ENCODE measurements at regions of chr6 and their contacts with region 1.

Region 1: GRCh38 chr6:154474636-154475428 is 35.7 kb downstream of the CNKSR3 start:
- DNase-seq: peak; percentile 41 to 43
- H3K4me3 ChIP-seq: no peak overlapping the region
- H3K27ac ChIP-seq: 0 out of 2 replicates have a peak overlapping the region, but pooled peaks have one; percentile 24
- H3K4me1 ChIP-seq: peaks cover 15% of the 10 kb centered on the region
- H3K27me3 ChIP-seq: no peaks in the 10 kb centered on the region
- CTCF ChIP-seq: no peak

Region 2: GRCh38 chr6:154399097-154399496 is 75.7 kb before region 1 on chr6:
- CTCF ChIA-PET with region 1: no interaction called
- POLR2A ChIA-PET with region 1: no interaction called
- intact Hi-C with region 1: no loop called
- DNase-seq: no peak
- H3K4me3 ChIP-seq: no peak overlapping the region
- H3K27ac ChIP-seq: no peak overlapping the region
- H3K4me1 ChIP-seq: peaks cover 8% of the 10 kb centered on the region; the same call in 1 of the 2 replicates
- H3K27me3 ChIP-seq: no peaks in the 10 kb centered on the region
- CTCF ChIP-seq: no peak

Region 3: DNA sequence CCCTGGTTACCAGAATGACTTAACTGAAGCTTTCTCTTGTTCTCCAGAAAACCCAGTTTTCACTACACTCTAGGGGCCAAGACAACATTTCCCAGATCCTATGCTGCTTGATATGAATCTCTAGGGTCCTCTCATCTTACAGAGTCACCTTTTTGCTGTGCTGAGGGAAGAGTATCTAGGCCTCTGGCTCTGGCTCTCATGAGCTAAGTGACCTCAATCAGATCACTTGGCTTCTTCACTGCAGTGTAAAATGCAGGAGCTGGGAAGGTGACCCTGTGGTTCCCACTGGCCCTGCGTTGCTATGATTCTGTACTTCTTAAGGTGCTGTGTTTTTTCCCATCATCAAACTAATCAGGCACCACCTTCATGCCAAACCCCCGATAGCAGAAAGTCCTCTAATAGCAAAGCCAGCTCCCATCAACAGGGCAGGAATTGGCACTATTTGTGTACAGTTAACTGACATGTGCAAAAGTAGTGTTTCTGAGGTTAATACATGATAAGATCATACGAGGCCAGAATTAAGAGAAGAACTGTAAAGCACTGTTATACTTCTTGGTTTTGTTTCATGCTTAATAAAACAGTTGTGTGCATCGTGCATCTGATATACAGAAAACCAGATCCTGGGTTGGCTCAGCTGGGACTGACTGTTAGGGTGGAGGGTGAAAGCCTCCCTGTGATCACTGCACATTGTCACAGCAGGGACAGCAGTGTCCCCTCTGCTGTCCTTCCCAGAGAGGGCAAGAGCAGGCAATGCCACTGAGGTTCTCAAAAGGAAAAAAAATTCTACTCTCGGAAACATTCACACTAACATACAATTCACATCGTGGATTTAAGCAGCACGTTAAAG is 11.0 kb before region 1 on chr6:
- CTCF ChIA-PET with region 1: no interaction called
- POLR2A ChIA-PET with region 1: interaction called, 15 read pairs
- intact Hi-C with region 1: no loop called
- DNase-seq: no peak
- H3K4me3 ChIP-seq: no peak overlapping the region
- H3K27ac ChIP-seq: no peak overlapping the region
- H3K4me1 ChIP-seq: no peaks in the 10 kb centered on the region
- H3K27me3 ChIP-seq: no peaks in the 10 kb centered on the region
- CTCF ChIP-seq: no peak

Region 4: GRCh38 chr6:154526996-154527395 is 52.2 kb after region 1 on chr6:
- CTCF ChIA-PET with region 1: no interaction called
- POLR2A ChIA-PET with region 1: interaction called, 13 read pairs
- intact Hi-C with region 1: no loop called
- DNase-seq: no peak
- H3K4me3 ChIP-seq: no peak overlapping the region
- H3K27ac ChIP-seq: no peak overlapping the region
- H3K4me1 ChIP-seq: no peaks in the 10 kb centered on the region
- H3K27me3 ChIP-seq: no peaks in the 10 kb centered on the region
- CTCF ChIP-seq: no peak

Measured in PC-9 (cell line).